Activated CD8-positive, alpha-beta memory T cell treated with anti-CD3 and anti-CD28 coated beads, Interleukin-2, amount 10 ng/mL, durations not matched to agents 7 days and 5 days (primary cell): ENCODE measurements at regions of chr12 and their contacts with region 1.

Region 1: GRCh38 chr12:98754095-98754494 is 109.0 kb downstream of the APAF1 start:
- DNase-seq: peak; percentile 78
- ATAC-seq: peak; percentile 96
- H3K4me3 Mint-ChIP-seq: peak overlapping the region; percentile 0
- H3K27ac Mint-ChIP-seq: peak overlapping the region; percentile 77
- H3K4me1 Mint-ChIP-seq: peaks cover 28% of the 10 kb centered on the region
- H3K27me3 Mint-ChIP-seq: no peaks in the 10 kb centered on the region

Region 2: DNA sequence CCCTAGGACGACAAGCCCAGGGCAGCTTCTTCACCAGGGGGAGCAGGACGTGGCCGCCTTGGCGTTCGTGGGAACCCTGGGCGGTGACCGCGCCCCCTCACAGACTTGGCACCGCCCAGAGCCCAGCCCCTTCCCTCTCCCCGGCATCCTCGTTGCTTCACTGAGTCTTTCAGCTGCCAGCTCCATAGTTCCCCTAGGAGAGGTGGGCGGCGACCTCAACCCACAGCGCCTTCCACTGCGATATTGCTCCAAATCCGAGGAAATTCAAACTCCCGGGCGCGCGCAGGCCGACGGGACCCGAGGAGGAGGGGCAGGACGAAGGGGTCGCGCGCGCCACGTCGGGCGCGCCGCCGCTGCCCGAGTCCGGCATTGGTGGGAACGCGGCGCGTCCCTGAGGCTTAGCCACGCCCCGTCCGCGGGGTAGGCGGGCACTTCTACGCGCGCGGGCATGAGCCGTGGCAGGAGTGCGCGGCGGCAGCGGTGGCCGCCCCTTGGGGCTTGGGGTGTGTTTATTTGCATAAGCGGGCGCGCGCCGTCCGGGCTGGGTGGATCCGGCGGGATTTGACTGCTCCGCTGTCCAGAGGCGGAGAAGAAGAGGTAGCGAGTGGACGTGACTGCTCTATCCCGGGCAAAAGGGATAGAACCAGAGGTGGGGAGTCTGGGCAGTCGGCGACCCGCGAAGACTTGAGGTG is 109.2 kb before region 1 on chr12 and contains the starts of genes APAF1 and IKBIP:
- CTCF ChIA-PET with region 1: no interaction called
- DNase-seq: peak; percentile 97
- ATAC-seq: peak; percentile 89
- H3K4me3 Mint-ChIP-seq: peak within 1 kb of the TSS; percentile 92
- H3K27ac Mint-ChIP-seq: peak within 1 kb of the TSS; percentile 92
- H3K4me1 Mint-ChIP-seq: peaks cover 37% of the 10 kb centered on the region
- H3K27me3 Mint-ChIP-seq: no peaks in the 10 kb centered on the region
- total RNA-seq, gene APAF1: 27.9 to 36.3 TPM
- total RNA-seq, gene IKBIP: 28.9 to 29.3 TPM

Region 3: GRCh38 chr12:98725476-98726247 is 28.4 kb before region 1 on chr12:
- CTCF ChIA-PET with region 1: interaction called, 10 read pairs
- DNase-seq: peak; percentile 76
- ATAC-seq: peak; percentile 68
- H3K4me3 Mint-ChIP-seq: no peak overlapping the region
- H3K27ac Mint-ChIP-seq: peak overlapping the region; percentile 70
- H3K4me1 Mint-ChIP-seq: peaks cover 20% of the 10 kb centered on the region
- H3K27me3 Mint-ChIP-seq: no peaks in the 10 kb centered on the region

Region 4: DNA sequence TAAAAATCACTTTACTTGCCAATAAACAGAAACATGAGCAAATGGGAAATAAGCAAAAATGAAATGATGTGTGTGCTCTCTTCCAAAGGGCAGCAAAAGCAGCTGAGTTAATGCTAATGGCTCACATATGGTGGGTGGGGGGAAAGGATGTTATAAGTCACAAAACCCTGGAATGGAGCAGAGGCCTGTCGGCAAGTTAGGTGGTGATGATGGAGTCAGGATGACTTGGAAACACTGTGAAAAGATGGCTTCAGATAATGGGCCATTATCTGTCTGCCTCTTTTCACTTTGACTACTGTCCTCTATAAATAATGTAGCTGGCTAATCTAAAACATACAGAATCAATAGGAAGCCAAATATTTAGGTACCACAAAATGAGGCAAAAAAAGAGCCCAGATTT is 119.7 kb after region 1 on chr12:
- CTCF ChIA-PET with region 1: no interaction called
- DNase-seq: no peak
- ATAC-seq: no peak
- H3K4me3 Mint-ChIP-seq: no peak overlapping the region
- H3K27ac Mint-ChIP-seq: no peak overlapping the region
- H3K4me1 Mint-ChIP-seq: peaks cover 9% of the 10 kb centered on the region
- H3K27me3 Mint-ChIP-seq: peaks cover 21% of the 10 kb centered on the region